ENCODE measurements at regions of chr11 and their contacts with region 1.

Region 1: DNA sequence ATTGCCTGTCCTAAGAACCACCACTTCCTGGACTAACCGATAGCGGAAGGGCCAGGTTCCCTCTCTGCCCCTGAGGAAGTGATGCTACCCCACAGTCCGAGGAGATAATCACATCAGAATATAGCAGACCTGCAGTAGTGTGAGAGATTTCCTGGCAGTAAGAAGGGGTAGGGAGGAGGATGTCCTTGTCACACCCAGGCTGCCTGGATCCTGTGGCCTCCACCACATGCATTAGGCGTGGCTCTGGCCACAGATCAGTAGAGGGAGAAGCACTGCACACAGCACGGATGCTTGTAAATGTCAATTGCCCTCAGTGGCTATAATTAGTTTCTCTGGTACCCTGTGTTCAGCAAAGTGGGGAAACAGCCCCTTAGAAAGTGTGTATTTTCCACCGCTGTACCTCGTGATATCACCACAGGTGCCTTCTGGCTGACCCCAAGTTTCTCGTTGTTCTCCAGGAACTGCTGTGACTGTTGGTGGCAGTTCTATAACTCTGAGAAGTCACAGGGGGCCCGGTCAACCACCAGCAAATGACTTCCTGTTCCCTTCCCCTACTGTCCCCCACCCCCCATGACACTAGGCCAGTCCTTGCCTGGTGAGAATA is 61.8 kb downstream of the UBASH3B start:
- DNase-seq: peak; percentile 72
- ATAC-seq: peak; percentile 87
- H3K4me3 Mint-ChIP-seq: peak overlapping the region; percentile 69
- H3K27ac Mint-ChIP-seq: peak overlapping the region; percentile 79
- H3K4me1 Mint-ChIP-seq: peaks cover 80% of the 10 kb centered on the region
- H3K27me3 Mint-ChIP-seq: no peaks in the 10 kb centered on the region

Region 2: GRCh38 chr11:122593473-122594420 is 123.6 kb before region 1 on chr11:
- POLR2A ChIA-PET with region 1: no interaction called
- DNase-seq: no peak
- ATAC-seq: no peak
- H3K4me3 Mint-ChIP-seq: no peak overlapping the region
- H3K27ac Mint-ChIP-seq: no peak overlapping the region
- H3K4me1 Mint-ChIP-seq: no peaks in the 10 kb centered on the region
- H3K27me3 Mint-ChIP-seq: peaks cover 34% of the 10 kb centered on the region

Region 3: GRCh38 chr11:122697636-122698167 is 19.7 kb before region 1 on chr11:
- POLR2A ChIA-PET with region 1: interaction called, 12 read pairs
- DNase-seq: no peak
- ATAC-seq: peak; percentile 84
- H3K4me3 Mint-ChIP-seq: peak overlapping the region; percentile 76
- H3K27ac Mint-ChIP-seq: peak overlapping the region; percentile 93
- H3K4me1 Mint-ChIP-seq: peaks cover 48% of the 10 kb centered on the region
- H3K27me3 Mint-ChIP-seq: no peaks in the 10 kb centered on the region

Region 4: GRCh38 chr11:122832721-122833470 is 115.5 kb after region 1 on chr11:
- POLR2A ChIA-PET with region 1: no interaction called
- DNase-seq: no peak
- ATAC-seq: no peak
- H3K4me3 Mint-ChIP-seq: peak overlapping the region; percentile 9
- H3K27ac Mint-ChIP-seq: peak overlapping the region; percentile 43
- H3K4me1 Mint-ChIP-seq: peaks cover 18% of the 10 kb centered on the region
- H3K27me3 Mint-ChIP-seq: peaks cover 3% of the 10 kb centered on the region